ENCODE measurements at regions of chr6 and their contacts with region 1.

Region 1: DNA sequence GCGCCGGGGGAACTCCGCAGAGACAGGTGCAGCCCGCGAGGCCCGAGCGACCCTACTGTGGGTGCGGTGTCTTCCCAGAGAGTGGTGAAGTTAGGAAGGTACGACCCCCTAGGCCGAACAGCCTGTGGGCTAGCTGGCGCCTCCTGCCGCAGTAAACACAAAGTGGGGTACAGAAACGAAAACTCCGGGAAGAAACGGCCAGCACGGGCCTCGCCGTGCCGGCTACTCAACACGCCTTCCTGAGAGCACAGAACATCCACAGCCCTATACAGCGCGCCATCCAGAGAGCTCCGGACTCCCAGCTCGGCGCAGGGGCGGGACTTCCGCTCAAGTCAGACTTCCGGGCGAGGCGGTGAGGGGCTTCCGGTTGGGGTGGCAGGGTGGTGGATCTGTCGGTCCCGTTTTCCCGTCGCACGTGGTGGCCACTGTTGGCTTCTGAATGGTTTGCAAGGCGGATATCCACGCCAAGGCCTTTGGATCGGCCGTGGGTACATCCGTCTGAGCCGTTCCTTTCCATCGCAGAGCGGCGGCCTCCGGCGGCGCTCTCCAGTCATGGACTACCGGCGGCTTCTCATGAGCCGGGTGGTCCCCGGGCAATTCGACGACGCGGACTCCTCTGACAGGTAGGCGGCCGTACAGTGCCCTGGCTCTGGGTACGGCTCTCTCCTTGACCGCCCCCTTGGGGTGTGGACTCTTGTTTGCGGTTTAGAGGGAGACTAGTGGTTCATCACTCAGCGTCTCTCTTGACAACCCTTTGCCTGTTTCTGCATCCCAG is at the starts of genes CAGE1 and RIOK1:
- DNase-seq: peak; percentile 96
- ATAC-seq: peak; percentile 99
- H3K4me3 ChIP-seq: peak within 1 kb of the TSS; percentile 78 to 87 (median 84)
- H3K27ac ChIP-seq: peak within 1 kb of the TSS; percentile 88
- H3K4me1 ChIP-seq: peaks cover 37% of the 10 kb centered on the region
- H3K27me3 ChIP-seq: no peaks in the 10 kb centered on the region; a peak in 1 of 5 replicates
- CTCF ChIP-seq: peak; percentile 52
- EP300 ChIP-seq: peak in 1 of 2 experiments; percentile 17; a peak in 1 of 4 replicates
- POLR2A ChIP-seq: peak; percentile 96 to 97
- RAD21 ChIP-seq: peak; percentile 62
- total RNA-seq, gene CAGE1: 0.15 TPM in 1 of 2 replicates, not detected in the other
- total RNA-seq, gene RIOK1: 37.8 and 45.7 TPM in 2 replicates

Region 2: GRCh38 chr6:7276199-7276524 is 113.5 kb before region 1 on chr6:
- CTCF ChIA-PET with region 1: interaction called, 7 read pairs
- POLR2A ChIA-PET with region 1: interaction called, 8 read pairs
- in situ Hi-C with region 1: no loop called
- intact Hi-C with region 1: loop called (anchors 1 kb)
- DNase-seq: no peak
- ATAC-seq: no peak
- H3K4me3 ChIP-seq: no peak overlapping the region
- H3K27ac ChIP-seq: no peak overlapping the region
- H3K4me1 ChIP-seq: peaks cover 11% of the 10 kb centered on the region
- H3K27me3 ChIP-seq: no peaks in the 10 kb centered on the region
- CTCF ChIP-seq: no peak
- EP300 ChIP-seq: no peak
- POLR2A ChIP-seq: no peak
- RAD21 ChIP-seq: no peak

Region 3: DNA sequence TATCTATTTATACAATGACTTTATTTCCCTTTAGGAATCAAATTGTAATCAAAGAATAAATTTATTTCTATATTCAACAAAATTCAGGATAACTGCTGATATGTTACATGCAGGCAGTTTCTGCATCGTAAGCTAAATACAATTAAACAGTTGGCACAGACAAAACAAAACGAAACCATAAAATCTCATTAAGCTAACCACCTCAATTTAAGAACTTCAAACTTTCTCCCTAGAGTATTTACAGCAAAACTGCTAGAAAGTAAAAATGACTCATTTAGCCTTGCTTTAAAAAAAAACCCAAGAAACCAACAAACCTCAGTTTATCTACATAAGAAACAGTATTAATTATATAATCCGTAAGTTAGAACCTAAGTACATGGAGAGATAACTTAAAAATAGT is 93.7 kb before region 1 on chr6:
- CTCF ChIA-PET with region 1: no interaction called
- POLR2A ChIA-PET with region 1: no interaction called
- in situ Hi-C with region 1: no loop called
- intact Hi-C with region 1: no loop called
- DNase-seq: no peak
- ATAC-seq: no peak
- H3K4me3 ChIP-seq: no peak overlapping the region
- H3K27ac ChIP-seq: no peak overlapping the region
- H3K4me1 ChIP-seq: no peaks in the 10 kb centered on the region
- H3K27me3 ChIP-seq: no peaks in the 10 kb centered on the region
- CTCF ChIP-seq: no peak
- EP300 ChIP-seq: no peak
- POLR2A ChIP-seq: no peak
- RAD21 ChIP-seq: no peak

Region 4: DNA sequence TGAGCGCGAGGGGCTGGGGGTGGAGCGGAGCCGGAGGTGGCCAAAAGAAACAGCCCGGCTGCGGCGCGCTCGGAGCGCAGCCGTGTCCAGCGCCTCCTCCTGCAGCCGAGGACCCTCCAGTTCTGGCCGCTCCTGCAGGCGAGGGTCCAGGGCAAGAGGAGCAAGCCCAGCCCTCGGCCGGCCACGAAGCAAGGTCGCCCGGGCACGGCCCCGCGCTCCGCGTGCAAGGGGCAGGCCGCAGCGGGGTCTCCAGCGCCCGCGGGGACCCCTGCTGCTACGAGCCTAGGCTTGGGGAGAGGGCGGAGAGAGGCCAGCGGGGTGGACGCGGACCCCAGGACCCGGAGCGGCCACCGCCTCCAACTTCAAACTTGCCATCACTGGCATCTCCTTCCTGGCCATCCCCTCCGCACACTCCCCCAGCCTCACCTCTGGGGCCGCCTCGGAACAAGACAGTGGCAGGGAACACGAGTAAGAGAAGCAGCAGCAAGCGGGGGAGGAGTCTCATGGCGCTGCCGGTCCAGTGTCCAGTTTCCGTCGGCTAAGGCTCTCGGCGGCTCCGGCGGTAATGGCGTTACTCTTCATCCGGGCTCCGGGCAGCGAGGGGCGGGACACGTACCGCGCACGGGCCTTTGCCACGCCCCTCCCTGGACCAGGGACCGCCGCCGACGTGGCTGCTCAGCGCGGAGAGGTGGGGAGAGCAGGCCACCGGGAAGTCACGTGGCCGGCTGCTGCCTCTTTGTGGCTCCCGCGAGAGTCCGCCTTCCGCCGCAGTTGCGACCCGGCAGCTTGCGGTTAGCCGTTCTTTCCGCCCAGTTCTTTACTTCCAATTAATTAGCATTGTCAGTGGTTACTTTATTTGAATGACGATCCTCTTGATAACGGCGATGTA is 76.8 kb before region 1 on chr6 and contains the start of gene SSR1:
- CTCF ChIA-PET with region 1: no interaction called
- POLR2A ChIA-PET with region 1: interaction called, 39 read pairs
- in situ Hi-C with region 1: no loop called
- intact Hi-C with region 1: loop called (anchors 1 kb)
- DNase-seq: peak; percentile 95
- ATAC-seq: peak; percentile 93
- H3K4me3 ChIP-seq: peak within 1 kb of the TSS; percentile 85 to 98 (median 97)
- H3K27ac ChIP-seq: peak within 1 kb of the TSS; percentile 91
- H3K4me1 ChIP-seq: peaks cover 69% of the 10 kb centered on the region
- H3K27me3 ChIP-seq: no peaks in the 10 kb centered on the region; a peak in 1 of 5 replicates
- CTCF ChIP-seq: no peak
- EP300 ChIP-seq: peak in 1 of 2 experiments; percentile 67; a peak in 2 of 4 replicates
- POLR2A ChIP-seq: peak; percentile 97 to 98
- RAD21 ChIP-seq: peak; percentile 54
- total RNA-seq, gene SSR1: 208 and 243 TPM in 2 replicates

Region 5: DNA sequence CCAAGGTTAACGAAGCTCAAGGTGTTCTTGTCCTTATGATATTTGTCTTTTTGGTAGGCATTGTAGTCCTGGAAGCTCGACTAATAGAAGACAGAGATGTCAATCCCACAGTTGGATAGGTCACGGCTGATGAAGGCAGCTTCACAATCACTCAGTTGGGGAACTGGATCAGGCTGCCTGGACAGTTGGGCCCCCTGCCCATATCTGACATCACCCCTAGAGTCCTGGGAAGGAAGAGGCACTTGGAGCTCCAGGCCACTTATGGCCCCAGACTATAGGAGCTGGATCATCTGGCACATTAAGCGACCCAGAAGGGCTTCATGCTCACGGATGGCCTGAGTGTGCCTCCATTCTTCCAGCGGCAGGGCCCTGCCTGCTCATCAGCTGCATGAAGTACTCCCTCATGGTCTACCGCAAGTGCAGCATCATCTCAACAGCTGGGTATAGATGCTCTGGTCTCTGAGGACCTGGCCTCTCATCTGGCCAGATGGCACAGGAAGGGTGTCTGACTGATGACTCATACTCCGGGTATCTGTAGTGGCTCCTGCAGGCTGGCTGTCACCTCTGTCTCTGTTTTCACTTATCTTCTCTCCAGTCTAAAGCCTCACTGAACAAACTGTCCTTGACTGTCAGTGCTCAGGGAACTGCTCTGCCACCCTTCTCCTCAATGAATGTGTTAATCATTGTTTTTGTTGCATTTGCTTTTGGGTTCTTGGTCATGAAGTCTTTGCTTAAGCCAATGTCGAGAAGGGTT is 47.5 kb before region 1 on chr6:
- CTCF ChIA-PET with region 1: interaction called, 6 read pairs
- POLR2A ChIA-PET with region 1: interaction called, 11 read pairs
- in situ Hi-C with region 1: no loop called
- intact Hi-C with region 1: loop called (anchors 1 kb)
- DNase-seq: peak; percentile 91
- ATAC-seq: peak; percentile 93
- H3K4me3 ChIP-seq: no peak overlapping the region
- H3K27ac ChIP-seq: no peak overlapping the region
- H3K4me1 ChIP-seq: peaks cover 37% of the 10 kb centered on the region
- H3K27me3 ChIP-seq: no peaks in the 10 kb centered on the region; a peak in 1 of 5 replicates
- CTCF ChIP-seq: no peak; the same call in 1 of the 2 replicates
- EP300 ChIP-seq: peak in 1 of 2 experiments; percentile 46; a peak in 1 of 4 replicates
- POLR2A ChIP-seq: no peak
- RAD21 ChIP-seq: no peak

Region 6: GRCh38 chr6:7424967-7425807 is 35.5 kb after region 1 on chr6:
- CTCF ChIA-PET with region 1: no interaction called
- POLR2A ChIA-PET with region 1: interaction called, 17 read pairs
- in situ Hi-C with region 1: no loop called
- intact Hi-C with region 1: no loop called
- DNase-seq: peak; percentile 79
- ATAC-seq: peak; percentile 85
- H3K4me3 ChIP-seq: no peak overlapping the region
- H3K27ac ChIP-seq: no peak overlapping the region
- H3K4me1 ChIP-seq: peaks cover 24% of the 10 kb centered on the region
- H3K27me3 ChIP-seq: no peaks in the 10 kb centered on the region
- CTCF ChIP-seq: peak; percentile 87
- EP300 ChIP-seq: no peak
- POLR2A ChIP-seq: no peak
- RAD21 ChIP-seq: peak; percentile 84

Region 7: DNA sequence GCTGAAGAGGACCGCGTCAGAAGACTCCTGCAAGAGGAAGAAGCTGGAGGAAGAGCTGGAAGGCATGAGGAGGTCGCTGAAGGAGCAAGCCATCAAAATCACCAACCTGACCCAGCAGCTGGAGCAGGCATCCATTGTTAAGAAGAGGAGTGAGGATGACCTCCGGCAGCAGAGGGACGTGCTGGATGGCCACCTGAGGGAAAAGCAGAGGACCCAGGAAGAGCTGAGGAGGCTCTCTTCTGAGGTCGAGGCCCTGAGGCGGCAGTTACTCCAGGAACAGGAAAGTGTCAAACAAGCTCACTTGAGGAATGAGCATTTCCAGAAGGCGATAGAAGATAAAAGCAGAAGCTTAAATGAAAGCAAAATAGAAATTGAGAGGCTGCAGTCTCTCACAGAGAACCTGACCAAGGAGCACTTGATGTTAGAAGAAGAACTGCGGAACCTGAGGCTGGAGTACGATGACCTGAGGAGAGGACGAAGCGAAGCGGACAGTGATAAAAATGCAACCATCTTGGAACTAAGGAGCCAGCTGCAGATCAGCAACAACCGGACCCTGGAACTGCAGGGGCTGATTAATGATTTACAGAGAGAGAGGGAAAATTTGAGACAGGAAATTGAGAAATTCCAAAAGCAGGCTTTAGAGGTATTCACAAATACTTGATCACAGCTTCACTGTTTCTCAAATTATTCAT is 191.4 kb after region 1 on chr6:
- CTCF ChIA-PET with region 1: no interaction called
- POLR2A ChIA-PET with region 1: interaction called, 11 read pairs
- in situ Hi-C with region 1: no loop called
- intact Hi-C with region 1: no loop called
- DNase-seq: peak; percentile 80
- ATAC-seq: peak; percentile 73
- H3K4me3 ChIP-seq: peak overlapping the region in 1 of 3 experiments; percentile 35; a peak in 2 of 6 replicates
- H3K27ac ChIP-seq: peak overlapping the region; percentile 63
- H3K4me1 ChIP-seq: peaks cover 34% of the 10 kb centered on the region
- H3K27me3 ChIP-seq: no peaks in the 10 kb centered on the region
- CTCF ChIP-seq: no peak
- EP300 ChIP-seq: peak in 1 of 2 experiments; percentile 43; a peak in 1 of 4 replicates
- POLR2A ChIP-seq: peak in 1 of 2 experiments; percentile 41; a peak in 1 of 4 replicates
- RAD21 ChIP-seq: no peak

Region 8: DNA sequence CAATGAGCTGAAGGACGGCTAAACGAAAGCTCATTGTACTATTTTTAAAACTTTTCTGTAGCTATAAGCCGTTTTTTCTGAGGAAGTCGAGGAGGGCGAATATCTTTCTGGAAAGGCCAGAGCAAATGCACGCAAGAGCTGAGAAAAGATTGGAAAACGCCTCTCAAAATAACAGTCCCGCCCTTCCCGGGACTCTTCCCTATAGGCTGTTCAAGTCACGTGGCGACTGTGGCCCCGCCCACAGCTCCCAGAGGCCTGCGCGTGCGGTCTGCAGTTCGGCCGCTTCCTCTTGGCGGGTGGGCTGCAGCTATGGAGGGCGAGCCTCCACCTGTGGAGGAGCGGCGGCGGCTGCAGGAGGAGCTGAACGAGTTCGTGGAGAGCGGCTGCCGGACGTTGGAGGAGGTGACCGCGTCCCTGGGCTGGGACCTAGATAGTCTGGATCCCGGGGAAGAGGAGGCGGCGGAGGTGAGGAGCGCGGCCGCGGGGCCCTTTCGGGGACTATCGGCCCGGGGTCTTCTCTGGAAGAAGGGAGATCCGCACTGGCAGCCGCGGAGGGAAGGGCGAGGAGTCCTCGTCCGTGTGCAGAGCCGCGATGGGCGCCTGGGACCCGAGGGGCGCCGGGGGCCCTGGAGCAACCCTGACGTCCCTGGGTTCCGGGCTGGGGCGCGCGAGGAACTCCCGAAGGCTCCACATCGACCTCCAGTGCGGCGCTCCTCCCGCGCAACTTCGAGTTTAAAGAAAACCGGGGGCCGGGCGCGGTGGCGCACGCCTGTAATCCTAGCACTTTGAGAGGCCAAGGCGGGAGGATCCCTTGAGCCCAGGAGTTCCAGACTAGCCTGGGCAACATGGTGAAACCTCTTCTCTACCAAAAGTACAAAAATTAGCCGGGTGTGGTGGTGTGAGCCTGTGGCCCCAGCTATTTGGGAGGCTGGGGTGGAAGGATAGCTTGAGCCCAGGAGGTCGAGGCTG is 200.6 kb after region 1 on chr6 and contains the start of gene SNRNP48:
- CTCF ChIA-PET with region 1: no interaction called
- POLR2A ChIA-PET with region 1: interaction called, 11 read pairs
- in situ Hi-C with region 1: no loop called
- intact Hi-C with region 1: no loop called
- DNase-seq: peak; percentile 93
- ATAC-seq: peak; percentile 97
- H3K4me3 ChIP-seq: peak within 1 kb of the TSS; percentile 77 to 88 (median 86)
- H3K27ac ChIP-seq: peak within 1 kb of the TSS; percentile 64
- H3K4me1 ChIP-seq: peaks cover 34% of the 10 kb centered on the region
- H3K27me3 ChIP-seq: no peaks in the 10 kb centered on the region
- CTCF ChIP-seq: 0 out of 2 replicates have a peak, but pooled peaks have one; percentile 11
- EP300 ChIP-seq: no peak
- POLR2A ChIP-seq: peak; percentile 73 to 96; a peak in 3 of 4 replicates
- RAD21 ChIP-seq: no peak
- total RNA-seq, gene SNRNP48: 47.5 and 82.0 TPM in 2 replicates